Breast epithelium (tissue), 4 donors: ENCODE measurements at regions of chr4 and their contacts with region 1.

Region 1: DNA sequence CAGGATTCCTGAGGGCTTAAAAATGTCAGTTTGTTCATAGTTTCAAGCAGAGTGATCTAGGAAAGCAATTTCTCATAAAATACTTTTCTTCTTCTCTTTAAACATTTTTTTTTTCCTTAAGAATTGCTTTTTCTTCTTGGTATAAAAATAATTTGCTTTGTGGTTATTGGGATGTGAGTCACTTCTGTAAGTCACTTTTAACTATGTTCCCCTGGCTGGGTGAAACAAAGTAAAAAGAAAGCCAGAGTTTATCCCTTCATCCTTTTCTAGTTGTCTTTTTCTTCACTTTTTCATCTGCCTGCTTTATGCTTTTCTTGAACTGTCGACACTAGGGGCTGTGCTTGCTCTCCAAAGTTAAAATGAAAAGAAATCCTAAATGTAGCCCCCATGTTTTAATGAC is 33.5 kb downstream of the ARSJ start:
- DNase-seq: no peak
- H3K4me3 ChIP-seq: no peak overlapping the region
- H3K27ac ChIP-seq: no peak overlapping the region
- H3K4me1 ChIP-seq: no peaks in the 10 kb centered on the region
- H3K27me3 ChIP-seq: no peaks in the 10 kb centered on the region
- CTCF ChIP-seq: no peak
- POLR2A ChIP-seq: no peak

Region 2: GRCh38 chr4:114598191-114599121 is 652.5 kb after region 1 on chr4 and contains the start of gene UGT8:
- intact Hi-C with region 1: loop called (anchors 5 kb)
- DNase-seq: peak in 1 of 2 donors; percentile 30
- H3K4me3 ChIP-seq: peak within 1 kb of the TSS; percentile 41 to 77 (median 65)
- H3K27ac ChIP-seq: peak within 1 kb of the TSS; percentile 79 to 80
- H3K4me1 ChIP-seq: no peaks in the 10 kb centered on the region
- H3K27me3 ChIP-seq: peaks cover 0 to 5% of the 10 kb centered on the region in 2 donors
- CTCF ChIP-seq: no peak
- POLR2A ChIP-seq: no peak
- total RNA-seq, gene UGT8: 0.16 to 14.9 (median 3.9) TPM